Activated naive CD4-positive, alpha-beta T cell treated with anti-CD3 and anti-CD28 coated beads for 36 hours (primary cell): ENCODE measurements at regions of chr12 and their contacts with region 1.

Region 1: GRCh38 chr12:89040146-89040964 is 311.9 kb downstream of the DUSP6 start:
- DNase-seq: peak; percentile 94
- H3K4me3 Mint-ChIP-seq: no peak overlapping the region
- H3K27ac Mint-ChIP-seq: peak overlapping the region; percentile 82
- H3K4me1 Mint-ChIP-seq: peaks cover 46% of the 10 kb centered on the region
- H3K27me3 Mint-ChIP-seq: no peaks in the 10 kb centered on the region

Region 2: DNA sequence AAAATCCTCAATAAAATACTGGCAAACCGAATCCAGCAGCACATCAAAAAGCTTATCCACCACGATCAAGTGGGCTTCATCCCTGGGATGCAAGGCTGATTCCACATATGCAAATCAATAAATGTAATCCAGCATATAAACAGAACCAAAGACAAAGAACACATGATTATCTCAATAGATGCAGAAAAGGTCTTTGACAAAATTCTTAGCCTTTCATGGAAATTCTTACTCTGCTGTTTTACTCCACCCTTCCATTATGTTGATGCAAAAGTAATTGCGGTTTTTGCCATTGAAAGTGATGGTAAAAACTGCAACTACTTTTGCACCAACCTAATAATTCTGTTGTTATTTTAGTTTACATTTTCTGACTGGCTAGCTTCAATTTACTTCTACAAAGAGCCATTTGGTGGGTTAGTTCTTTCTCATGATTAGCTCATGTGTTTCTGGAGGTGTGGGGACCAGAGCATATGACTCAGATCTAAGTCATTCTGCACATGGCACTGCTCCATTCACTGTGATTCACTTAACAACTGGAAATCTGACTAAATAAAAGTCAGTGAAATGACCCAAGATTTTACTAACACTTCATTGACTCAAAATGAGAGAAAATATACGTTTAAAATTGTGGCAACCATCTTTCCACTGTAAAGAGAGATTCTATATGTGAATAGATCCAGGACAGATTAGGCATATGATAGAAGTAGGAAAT is 798.3 kb before region 1 on chr12:
- CTCF ChIA-PET with region 1: no interaction called
- intact Hi-C with region 1: loop called (anchors 10 kb)
- DNase-seq: peak; percentile 65
- H3K4me3 Mint-ChIP-seq: no peak overlapping the region
- H3K27ac Mint-ChIP-seq: peak overlapping the region; percentile 68
- H3K4me1 Mint-ChIP-seq: peaks cover 36% of the 10 kb centered on the region
- H3K27me3 Mint-ChIP-seq: peaks cover 14% of the 10 kb centered on the region

Region 3: GRCh38 chr12:89117448-89118034 is 77.2 kb after region 1 on chr12:
- CTCF ChIA-PET with region 1: no interaction called
- intact Hi-C with region 1: no loop called
- DNase-seq: no peak
- H3K4me3 Mint-ChIP-seq: no peak overlapping the region
- H3K27ac Mint-ChIP-seq: no peak overlapping the region
- H3K4me1 Mint-ChIP-seq: no peaks in the 10 kb centered on the region
- H3K27me3 Mint-ChIP-seq: no peaks in the 10 kb centered on the region

Region 4: DNA sequence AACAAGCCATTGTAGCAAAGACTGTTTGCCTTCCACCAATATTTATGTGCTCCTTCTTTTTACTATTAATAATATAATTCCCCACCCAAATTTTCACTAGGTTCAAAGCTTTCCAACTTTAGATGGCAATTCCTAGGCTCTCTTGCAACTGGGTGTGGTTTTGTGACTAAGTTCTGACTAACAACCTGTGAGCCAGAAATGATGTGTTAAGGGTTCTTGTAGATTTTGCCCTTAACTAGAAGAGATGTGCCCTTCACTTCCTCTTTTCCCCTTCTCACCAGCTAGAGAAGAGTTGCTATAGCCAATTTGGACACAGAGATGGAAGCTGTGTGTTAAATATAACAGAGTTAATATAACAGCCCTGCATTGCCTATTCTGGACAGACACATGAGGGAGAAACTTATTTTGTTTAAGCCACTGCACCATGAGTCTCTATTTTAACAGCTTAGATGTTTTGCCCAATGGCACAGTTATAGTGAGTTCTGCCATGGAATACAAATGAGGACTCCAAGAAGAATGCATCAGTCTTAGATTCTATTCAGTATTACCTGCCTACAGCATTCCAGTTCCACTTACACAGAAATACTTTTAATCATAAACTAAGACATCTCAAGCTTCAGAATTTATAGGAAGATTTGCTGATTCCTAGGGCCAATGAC is 95.8 kb after region 1 on chr12:
- CTCF ChIA-PET with region 1: no interaction called
- intact Hi-C with region 1: loop called (anchors 1 kb)
- DNase-seq: peak; percentile 9
- H3K4me3 Mint-ChIP-seq: no peak overlapping the region
- H3K27ac Mint-ChIP-seq: no peak overlapping the region
- H3K4me1 Mint-ChIP-seq: peaks cover 22% of the 10 kb centered on the region
- H3K27me3 Mint-ChIP-seq: no peaks in the 10 kb centered on the region

Region 5: DNA sequence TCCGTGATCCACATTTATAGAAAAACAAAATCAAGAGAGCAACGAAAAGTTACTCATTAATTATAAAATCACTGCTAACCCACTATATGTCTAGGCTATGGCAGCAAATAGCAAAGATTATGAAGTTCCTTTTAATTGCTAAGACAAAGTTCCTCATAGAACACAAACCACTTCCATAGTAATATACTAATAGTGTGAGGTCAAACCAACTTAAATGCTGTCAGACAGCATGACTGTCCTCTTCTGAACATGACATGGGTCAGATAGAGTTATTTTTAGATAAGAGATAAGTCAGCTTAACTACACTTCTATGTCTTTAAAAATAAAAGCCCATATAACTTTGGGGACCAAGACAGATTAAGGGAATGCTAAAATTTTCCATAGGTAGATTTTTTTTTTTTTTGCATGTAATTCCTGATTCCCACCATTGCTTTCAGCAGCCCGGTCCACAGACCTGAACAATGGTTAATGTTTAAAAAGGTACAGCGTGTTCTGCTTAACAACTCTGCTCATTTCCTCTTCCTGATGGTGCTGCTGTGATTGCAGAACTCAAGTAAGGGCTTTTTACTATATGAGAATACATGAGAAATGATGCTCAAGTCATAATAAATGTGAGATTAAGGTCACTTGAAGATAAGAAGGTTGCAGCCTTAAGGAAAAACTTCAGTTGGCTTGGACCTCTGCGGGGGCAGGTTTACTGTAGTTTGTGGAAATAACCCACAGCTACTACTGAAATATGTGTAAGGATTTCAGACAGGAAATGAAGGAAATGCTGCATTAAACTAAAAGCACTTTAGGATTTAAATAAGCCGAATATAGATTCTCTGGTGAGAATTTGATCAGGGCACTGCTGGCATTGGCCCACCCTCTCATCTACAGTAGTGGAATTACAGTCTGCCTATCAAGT is 349.7 kb after region 1 on chr12:
- CTCF ChIA-PET with region 1: no interaction called
- intact Hi-C with region 1: loop called (anchors 2 kb)
- DNase-seq: peak; percentile 41
- H3K4me3 Mint-ChIP-seq: no peak overlapping the region
- H3K27ac Mint-ChIP-seq: no peak overlapping the region
- H3K4me1 Mint-ChIP-seq: peaks cover 18% of the 10 kb centered on the region
- H3K27me3 Mint-ChIP-seq: no peaks in the 10 kb centered on the region

Region 6: GRCh38 chr12:89524541-89525285 is 484.4 kb after region 1 on chr12 and contains the start of gene GALNT4:
- CTCF ChIA-PET with region 1: interaction called, 6 read pairs
- intact Hi-C with region 1: loop called (anchors 1 kb)
- DNase-seq: peak; percentile 80
- H3K4me3 Mint-ChIP-seq: peak within 1 kb of the TSS; percentile 94
- H3K27ac Mint-ChIP-seq: peak within 1 kb of the TSS; percentile 93
- H3K4me1 Mint-ChIP-seq: peaks cover 41% of the 10 kb centered on the region
- H3K27me3 Mint-ChIP-seq: no peaks in the 10 kb centered on the region
- total RNA-seq, gene GALNT4: 2.9 to 3.4 TPM

Region 7: GRCh38 chr12:89756585-89757321 is 716.4 kb after region 1 on chr12:
- CTCF ChIA-PET with region 1: no interaction called
- intact Hi-C with region 1: loop called (anchors 1 kb)
- DNase-seq: peak; percentile 48
- H3K4me3 Mint-ChIP-seq: no peak overlapping the region
- H3K27ac Mint-ChIP-seq: peak overlapping the region; percentile 37
- H3K4me1 Mint-ChIP-seq: peaks cover 23% of the 10 kb centered on the region
- H3K27me3 Mint-ChIP-seq: no peaks in the 10 kb centered on the region

Region 8: GRCh38 chr12:89949457-89950195 is 909.3 kb after region 1 on chr12:
- CTCF ChIA-PET with region 1: no interaction called
- intact Hi-C with region 1: loop called (anchors 10 kb)
- DNase-seq: peak; percentile 68
- H3K4me3 Mint-ChIP-seq: no peak overlapping the region
- H3K27ac Mint-ChIP-seq: no peak overlapping the region
- H3K4me1 Mint-ChIP-seq: peaks cover 39% of the 10 kb centered on the region
- H3K27me3 Mint-ChIP-seq: no peaks in the 10 kb centered on the region